MCF 10A (cell line): ENCODE measurements at regions of chr1 and their contacts with region 1.

Region 1: GRCh38 chr1:205750138-205751035 is at the start of gene NUCKS1:
- DNase-seq: peak; percentile 100
- H3K4me3 Mint-ChIP-seq: peak within 1 kb of the TSS; percentile 80
- H3K27ac Mint-ChIP-seq: peak within 1 kb of the TSS; percentile 96
- H3K4me1 Mint-ChIP-seq: peaks cover 15% of the 10 kb centered on the region
- H3K27me3 Mint-ChIP-seq: peaks cover 1% of the 10 kb centered on the region
- CTCF ChIP-seq: no peak
- total RNA-seq, gene NUCKS1: 605 and 615 TPM in 2 replicates

Region 2: DNA sequence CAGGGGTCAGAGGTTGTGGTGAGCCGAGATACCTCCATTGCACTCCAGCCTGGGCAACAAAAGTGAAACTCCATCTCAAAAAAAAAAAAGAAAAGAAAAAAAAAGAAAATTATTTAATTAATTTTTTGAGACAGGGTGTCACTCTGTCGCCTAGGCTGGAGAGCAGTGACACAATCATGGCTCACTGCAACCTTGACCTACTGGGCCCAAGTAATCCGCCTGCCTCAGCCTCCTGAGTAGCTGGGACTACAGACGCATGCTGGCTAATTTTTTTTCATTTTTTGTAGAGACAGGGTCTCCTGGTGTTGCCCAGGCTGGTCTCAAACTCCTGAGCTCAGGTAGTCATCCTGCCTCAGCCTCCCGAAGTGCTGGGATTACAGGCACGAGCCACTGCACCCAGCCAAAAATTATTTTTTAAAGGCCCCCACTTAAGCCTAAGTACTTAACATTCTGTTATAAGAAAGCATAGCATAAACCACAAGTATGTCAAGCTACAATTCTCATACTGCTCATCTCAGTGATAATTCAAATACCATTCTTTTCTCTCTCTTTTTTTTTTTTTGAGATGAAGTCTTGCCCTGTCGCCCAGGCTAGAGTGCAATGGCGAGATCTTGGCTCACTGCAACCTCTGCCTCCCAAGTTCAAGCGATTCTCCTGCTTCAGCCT is 20.3 kb before region 1 on chr1:
- CTCF ChIA-PET with region 1: interaction called, 6 read pairs
- POLR2A ChIA-PET with region 1: interaction called, 220 read pairs
- intact Hi-C with region 1: no loop called
- DNase-seq: no peak
- H3K4me3 Mint-ChIP-seq: no peak overlapping the region
- H3K27ac Mint-ChIP-seq: no peak overlapping the region
- H3K4me1 Mint-ChIP-seq: peaks cover 12% of the 10 kb centered on the region
- H3K27me3 Mint-ChIP-seq: no peaks in the 10 kb centered on the region
- CTCF ChIP-seq: no peak

Region 3: GRCh38 chr1:205739348-205740160 is 10.8 kb before region 1 on chr1:
- CTCF ChIA-PET with region 1: interaction called, 4 read pairs
- POLR2A ChIA-PET with region 1: interaction called, 220 read pairs
- intact Hi-C with region 1: no loop called
- DNase-seq: peak; percentile 85
- H3K4me3 Mint-ChIP-seq: no peak overlapping the region
- H3K27ac Mint-ChIP-seq: peak overlapping the region; percentile 3
- H3K4me1 Mint-ChIP-seq: peaks cover 23% of the 10 kb centered on the region
- H3K27me3 Mint-ChIP-seq: no peaks in the 10 kb centered on the region
- CTCF ChIP-seq: peak; percentile 48

Region 4: GRCh38 chr1:205766038-205766437 is 15.7 kb after region 1 on chr1:
- CTCF ChIA-PET with region 1: interaction called, 5 read pairs
- POLR2A ChIA-PET with region 1: interaction called, 19 read pairs
- intact Hi-C with region 1: no loop called
- DNase-seq: peak; percentile 62
- H3K4me3 Mint-ChIP-seq: no peak overlapping the region
- H3K27ac Mint-ChIP-seq: no peak overlapping the region
- H3K4me1 Mint-ChIP-seq: peaks cover 7% of the 10 kb centered on the region
- H3K27me3 Mint-ChIP-seq: no peaks in the 10 kb centered on the region
- CTCF ChIP-seq: no peak

Region 5: DNA sequence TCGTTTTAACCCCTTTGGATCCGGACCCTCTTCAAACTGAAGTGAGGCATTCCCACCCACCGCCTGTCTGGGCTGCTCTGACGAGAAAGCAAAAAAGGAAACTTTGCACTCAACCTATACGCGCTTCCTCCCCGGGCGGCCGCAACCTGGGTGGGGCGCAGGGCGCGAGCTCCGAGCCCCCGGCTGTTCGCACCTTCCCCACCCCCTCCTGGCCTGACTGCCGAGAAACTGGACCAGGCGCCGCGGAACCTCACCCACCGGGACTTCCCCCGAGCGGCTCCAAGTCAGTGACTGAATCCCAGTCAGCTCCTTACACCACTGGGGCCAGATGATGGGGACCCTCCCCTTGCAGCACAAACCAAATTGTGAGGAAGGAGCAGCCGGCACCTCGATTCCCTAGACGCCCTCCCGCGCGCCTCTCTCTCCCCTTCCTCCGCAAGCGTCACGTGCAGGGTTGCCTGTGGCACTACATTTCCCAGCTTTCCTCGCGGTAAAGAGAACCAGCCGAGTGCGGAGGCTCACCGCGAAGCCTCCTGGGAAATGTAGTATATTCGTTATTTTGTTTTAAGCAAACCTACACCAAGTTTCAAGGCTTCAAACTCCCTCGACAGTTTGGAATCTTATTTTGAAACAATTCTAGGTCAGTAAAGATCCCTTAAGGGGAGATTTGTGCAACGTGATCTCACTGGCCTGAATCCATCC is 24.8 kb after region 1 on chr1 and contains the start of gene RAB29:
- CTCF ChIA-PET with region 1: interaction called, 4 read pairs
- POLR2A ChIA-PET with region 1: interaction called, 58 read pairs
- intact Hi-C with region 1: no loop called
- DNase-seq: peak; percentile 95
- H3K4me3 Mint-ChIP-seq: peak within 1 kb of the TSS; percentile 88
- H3K27ac Mint-ChIP-seq: peak within 1 kb of the TSS; percentile 89
- H3K4me1 Mint-ChIP-seq: peaks cover 31% of the 10 kb centered on the region
- H3K27me3 Mint-ChIP-seq: no peaks in the 10 kb centered on the region
- CTCF ChIP-seq: no peak
- total RNA-seq, gene RAB29: 33.6 and 44.8 TPM in 2 replicates

Region 6: GRCh38 chr1:205812878-205813754 is 62.7 kb after region 1 on chr1 and contains the start of gene SLC41A1:
- CTCF ChIA-PET with region 1: no interaction called
- POLR2A ChIA-PET with region 1: interaction called, 32 read pairs
- intact Hi-C with region 1: loop called (anchors 5 kb)
- DNase-seq: peak; percentile 98
- H3K4me3 Mint-ChIP-seq: peak within 1 kb of the TSS; percentile 87
- H3K27ac Mint-ChIP-seq: peak within 1 kb of the TSS; percentile 40
- H3K4me1 Mint-ChIP-seq: peaks cover 42% of the 10 kb centered on the region
- H3K27me3 Mint-ChIP-seq: no peaks in the 10 kb centered on the region
- CTCF ChIP-seq: no peak
- total RNA-seq, gene SLC41A1: 48.8 and 49.7 TPM in 2 replicates

Region 7: GRCh38 chr1:205950280-205950679 is 199.9 kb after region 1 on chr1:
- CTCF ChIA-PET with region 1: interaction called, 4 read pairs
- POLR2A ChIA-PET with region 1: interaction called, 11 read pairs
- intact Hi-C with region 1: no loop called
- DNase-seq: peak; percentile 98
- H3K4me3 Mint-ChIP-seq: peak overlapping the region; percentile 7
- H3K27ac Mint-ChIP-seq: peak overlapping the region; percentile 1
- H3K4me1 Mint-ChIP-seq: peaks cover 69% of the 10 kb centered on the region
- H3K27me3 Mint-ChIP-seq: peaks cover 68% of the 10 kb centered on the region
- CTCF ChIP-seq: no peak